Endothelial cell of umbilical vein (primary cell): ENCODE measurements at regions of chr9 and their contacts with region 1.

Region 1: DNA sequence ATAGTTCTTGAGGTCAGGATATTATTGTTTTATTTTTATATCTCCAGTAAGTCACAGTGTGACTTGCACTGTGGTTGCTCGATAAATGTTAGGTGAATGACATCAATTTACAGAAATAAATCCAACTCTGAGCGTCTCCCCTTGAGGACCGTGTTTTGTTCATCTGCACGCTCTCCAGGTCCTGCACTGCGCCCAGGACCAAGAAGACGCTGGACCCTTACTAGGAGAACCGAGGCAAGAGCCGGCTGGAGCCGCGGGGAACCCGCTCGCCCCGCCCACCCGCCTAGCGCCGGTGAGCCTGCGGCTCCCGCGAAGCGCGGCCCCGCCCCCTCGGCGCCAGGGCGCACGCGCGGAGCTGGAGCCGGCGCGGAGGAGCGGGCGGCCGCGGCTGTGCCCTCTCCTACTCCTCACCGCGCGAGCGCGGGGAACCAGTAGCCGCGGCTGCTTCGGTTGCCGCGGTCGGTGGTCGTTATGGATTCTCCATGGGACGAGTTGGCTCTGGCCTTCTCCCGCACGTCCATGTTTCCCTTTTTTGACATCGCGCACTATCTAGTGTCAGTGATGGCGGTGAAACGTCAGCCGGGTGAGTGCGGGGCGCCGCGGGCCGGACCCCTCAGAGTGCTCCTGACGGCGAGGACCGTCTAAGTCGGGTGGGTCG is at the start of gene TMEM38B:
- DNase-seq: peak; percentile 79
- H3K4me3 ChIP-seq: peak within 1 kb of the TSS; percentile 72 to 94 (median 75)
- H3K27ac ChIP-seq: no peak within 1 kb of the TSS
- H3K4me1 ChIP-seq: peaks cover 7% of the 10 kb centered on the region
- H3K27me3 ChIP-seq: peaks cover 18 to 27% of the 10 kb centered on the region in 2 experiments
- CTCF ChIP-seq: no peak
- POLR2A ChIP-seq: peak; percentile 38
- total RNA-seq, gene TMEM38B: 6.5 and 7.7 TPM in 2 replicates

Region 2: GRCh38 chr9:105437704-105438103 is 256.6 kb before region 1 on chr9:
- CTCF ChIA-PET with region 1: no interaction called
- POLR2A ChIA-PET with region 1: no interaction called
- dilution Hi-C with region 1: no loop called
- intact Hi-C with region 1: no loop called
- DNase-seq: no peak
- H3K4me3 ChIP-seq: no peak overlapping the region
- H3K27ac ChIP-seq: no peak overlapping the region
- H3K4me1 ChIP-seq: no peaks in the 10 kb centered on the region
- H3K27me3 ChIP-seq: no peaks in the 10 kb centered on the region
- CTCF ChIP-seq: no peak
- POLR2A ChIP-seq: no peak

Region 3: DNA sequence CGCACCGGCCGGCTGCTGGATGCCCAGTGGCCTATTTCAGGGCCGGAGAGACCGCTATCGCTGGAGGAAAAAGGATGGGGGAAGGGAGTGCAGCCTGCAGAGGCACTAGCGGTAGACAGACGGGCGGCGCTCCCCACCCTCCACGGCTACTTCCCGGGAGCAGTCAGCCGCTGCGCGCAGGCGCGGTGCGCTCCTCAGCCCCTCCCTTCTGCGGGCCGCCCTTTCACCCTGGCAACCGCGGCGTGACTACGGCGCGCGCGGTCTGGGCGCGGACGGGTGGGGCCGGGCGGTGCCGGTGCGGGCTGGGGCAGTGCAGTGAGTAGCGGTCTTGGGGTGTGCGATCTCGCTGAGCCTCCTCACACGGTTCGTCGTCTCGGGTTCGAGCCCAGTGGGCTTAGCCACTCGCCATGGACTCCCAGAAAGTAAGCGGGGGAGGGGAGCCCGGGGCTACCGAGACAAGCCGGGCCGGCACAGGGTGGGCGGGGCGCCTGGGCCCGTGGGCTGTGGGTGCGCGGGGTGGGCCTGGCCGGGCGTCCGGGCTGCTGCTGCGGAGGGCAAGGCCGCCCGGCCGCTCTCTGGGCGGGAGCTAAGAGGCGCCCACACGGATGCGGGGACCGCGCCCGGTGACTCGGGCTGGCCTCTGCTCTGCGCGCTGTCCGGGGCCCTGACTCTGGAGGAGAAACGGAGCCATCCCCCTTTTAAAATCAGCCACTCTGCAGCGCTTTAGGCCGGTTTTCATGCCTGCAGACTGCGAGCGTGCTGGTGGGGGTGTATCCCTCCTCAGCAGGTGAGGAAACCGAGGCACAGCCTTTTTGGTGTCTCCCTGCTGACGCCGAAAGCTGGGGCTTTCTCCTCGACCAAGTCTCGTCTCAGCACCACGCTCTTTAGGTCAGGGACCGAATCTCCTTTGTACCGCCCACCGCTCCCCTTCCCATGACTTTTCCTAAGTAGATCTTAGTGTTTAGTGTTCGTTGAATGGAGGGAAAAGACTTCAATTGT is 246.2 kb before region 1 on chr9 and contains the start of gene FSD1L:
- CTCF ChIA-PET with region 1: no interaction called
- POLR2A ChIA-PET with region 1: no interaction called
- dilution Hi-C with region 1: no loop called
- intact Hi-C with region 1: loop called (anchors 5 kb)
- DNase-seq: peak; percentile 72
- H3K4me3 ChIP-seq: peak within 1 kb of the TSS; percentile 35 to 84 (median 74)
- H3K27ac ChIP-seq: peak within 1 kb of the TSS; percentile 65
- H3K4me1 ChIP-seq: peaks cover 17% of the 10 kb centered on the region
- H3K27me3 ChIP-seq: no peaks in the 10 kb centered on the region
- CTCF ChIP-seq: no peak
- POLR2A ChIP-seq: peak; percentile 53
- total RNA-seq, gene FSD1L: 7.5 and 8.5 TPM in 2 replicates

Region 4: GRCh38 chr9:105557771-105558610 is 136.3 kb before region 1 on chr9 and contains the start of gene FKTN:
- CTCF ChIA-PET with region 1: no interaction called
- POLR2A ChIA-PET with region 1: no interaction called
- dilution Hi-C with region 1: no loop called
- intact Hi-C with region 1: loop called (anchors 2 kb)
- DNase-seq: peak; percentile 92
- H3K4me3 ChIP-seq: peak within 1 kb of the TSS; percentile 52 to 87 (median 67)
- H3K27ac ChIP-seq: peak within 1 kb of the TSS; percentile 27
- H3K4me1 ChIP-seq: peaks cover 9% of the 10 kb centered on the region
- H3K27me3 ChIP-seq: no peaks in the 10 kb centered on the region
- CTCF ChIP-seq: no peak
- POLR2A ChIP-seq: peak; percentile 71
- total RNA-seq, gene FKTN: 13.2 and 14.4 TPM in 2 replicates

Region 5: DNA sequence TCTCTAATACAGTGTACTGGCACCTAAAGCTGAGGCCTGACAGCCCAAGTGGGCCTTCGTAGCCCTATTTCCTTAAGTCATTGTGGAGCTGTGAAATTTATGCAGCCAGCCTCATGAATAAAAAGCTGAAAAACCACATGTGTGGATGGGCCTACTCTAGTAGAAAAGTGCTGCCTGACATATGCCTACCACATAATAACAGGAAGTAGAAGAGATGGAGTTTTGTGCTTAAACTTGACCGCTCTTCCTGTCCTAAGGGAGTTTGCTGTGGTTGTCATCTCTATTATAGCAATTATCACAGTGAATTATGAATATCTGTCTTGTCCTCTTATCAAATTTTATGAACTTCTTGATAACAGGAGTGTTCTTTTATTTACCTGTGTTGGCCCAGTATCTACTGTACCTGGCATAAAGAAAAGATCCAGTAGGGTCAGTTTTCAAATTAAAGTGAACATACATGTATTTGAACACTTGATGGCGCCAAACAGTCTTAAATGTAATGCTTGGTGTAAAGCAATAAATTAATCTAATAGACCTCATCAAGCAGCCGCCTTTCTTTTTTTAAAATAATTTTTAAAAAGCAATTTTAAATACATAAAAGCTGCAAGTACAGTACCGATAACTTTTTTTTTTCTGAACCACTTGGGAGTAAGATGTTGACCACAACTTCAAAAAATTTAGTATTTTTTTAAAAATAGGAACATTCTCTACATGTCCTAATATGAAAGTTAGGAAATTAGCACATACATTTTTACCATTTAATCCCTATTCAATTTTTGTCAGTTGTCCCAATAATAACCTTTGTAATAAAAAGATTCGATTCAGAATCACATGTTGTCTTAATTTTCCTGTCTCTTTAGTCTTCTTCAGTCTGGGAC is 85.4 kb before region 1 on chr9:
- CTCF ChIA-PET with region 1: interaction called, 6 read pairs
- POLR2A ChIA-PET with region 1: no interaction called
- dilution Hi-C with region 1: no loop called
- intact Hi-C with region 1: loop called (anchors 2 kb)
- DNase-seq: peak; percentile 52
- H3K4me3 ChIP-seq: no peak overlapping the region
- H3K27ac ChIP-seq: no peak overlapping the region
- H3K4me1 ChIP-seq: no peaks in the 10 kb centered on the region
- H3K27me3 ChIP-seq: no peaks in the 10 kb centered on the region
- CTCF ChIP-seq: peak; percentile 33 to 38
- POLR2A ChIP-seq: no peak

Region 6: DNA sequence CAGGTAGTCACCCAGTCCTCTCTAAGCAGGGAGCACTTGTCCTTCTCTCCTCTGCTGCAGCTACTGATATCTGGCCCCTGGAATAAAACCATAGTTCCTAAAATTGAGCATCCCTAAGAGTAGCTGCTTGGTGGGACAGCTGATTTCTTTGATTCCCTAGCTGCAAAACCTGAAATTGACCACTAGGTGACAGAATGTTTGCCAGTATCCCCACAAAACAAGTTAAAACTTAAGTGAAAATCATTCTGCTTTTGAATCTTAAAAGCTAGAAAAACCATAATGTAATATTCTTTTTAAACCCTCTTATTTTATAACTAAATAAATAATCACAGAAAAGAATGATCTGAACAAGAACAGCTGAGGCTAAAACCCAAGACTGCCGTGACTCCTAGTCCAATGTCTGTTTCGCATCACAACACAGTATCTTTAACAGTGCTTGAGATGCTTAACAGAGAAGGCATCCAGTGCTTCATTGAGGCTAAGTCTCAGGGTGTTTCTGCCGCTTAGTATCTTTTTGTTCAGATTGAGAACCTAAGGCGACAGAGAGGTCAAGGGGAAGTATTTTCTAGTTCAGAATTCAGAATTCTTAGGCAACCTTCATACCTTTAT is 56.4 kb before region 1 on chr9:
- CTCF ChIA-PET with region 1: interaction called, 15 read pairs
- POLR2A ChIA-PET with region 1: no interaction called
- dilution Hi-C with region 1: no loop called
- intact Hi-C with region 1: no loop called
- DNase-seq: no peak
- H3K4me3 ChIP-seq: no peak overlapping the region
- H3K27ac ChIP-seq: no peak overlapping the region
- H3K4me1 ChIP-seq: no peaks in the 10 kb centered on the region
- H3K27me3 ChIP-seq: no peaks in the 10 kb centered on the region
- CTCF ChIP-seq: peak; percentile 19 to 29
- POLR2A ChIP-seq: no peak

Region 7: DNA sequence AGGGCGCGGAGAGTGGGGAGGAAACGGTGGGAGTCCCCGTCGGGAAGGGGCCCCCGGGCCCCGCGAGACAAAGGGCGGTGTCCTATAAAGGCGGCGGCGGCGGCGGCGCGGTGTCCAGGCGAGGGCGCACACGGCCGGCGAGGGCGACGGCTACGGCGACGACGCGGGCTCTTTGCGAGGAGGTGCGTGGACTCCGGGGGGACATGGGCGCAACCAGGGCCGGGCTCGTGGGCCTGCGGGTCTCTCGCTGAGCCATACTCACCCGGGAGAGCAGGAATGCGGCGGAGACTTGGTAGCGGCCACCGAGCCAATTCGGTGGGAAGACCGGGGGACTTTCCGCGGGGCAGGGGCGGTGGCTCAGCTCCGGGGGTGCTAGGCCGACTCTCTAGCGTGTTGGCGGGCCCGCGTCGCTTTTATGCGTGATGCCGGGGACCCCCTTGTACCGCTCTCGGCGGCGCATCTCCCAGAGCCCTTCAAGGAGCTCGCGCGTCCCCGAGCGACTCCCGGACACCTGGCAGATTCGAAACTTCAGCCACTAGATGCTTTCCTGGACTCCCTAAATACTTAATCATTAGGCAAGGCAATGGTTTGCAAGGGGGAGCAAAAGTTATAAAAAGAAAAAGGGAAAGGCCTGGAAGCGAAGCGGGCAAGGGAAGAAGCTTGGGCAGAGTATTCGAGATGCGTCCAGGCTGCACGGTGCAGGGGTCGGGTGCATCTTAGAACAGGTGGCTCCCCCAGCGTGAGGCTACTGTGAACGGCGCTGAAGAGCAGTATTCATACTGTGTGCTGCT is 38.0 kb before region 1 on chr9:
- CTCF ChIA-PET with region 1: interaction called, 12 read pairs
- POLR2A ChIA-PET with region 1: no interaction called
- dilution Hi-C with region 1: no loop called
- intact Hi-C with region 1: no loop called
- DNase-seq: no peak
- H3K4me3 ChIP-seq: peak overlapping the region in 2 of 3 experiments; percentile 12 to 44
- H3K27ac ChIP-seq: no peak overlapping the region
- H3K4me1 ChIP-seq: peaks cover 3% of the 10 kb centered on the region
- H3K27me3 ChIP-seq: peaks cover 15 to 27% of the 10 kb centered on the region in 2 experiments
- CTCF ChIP-seq: peak in 1 of 2 donors; percentile 16
- POLR2A ChIP-seq: no peak

Region 8: GRCh38 chr9:105712773-105713172 is 18.5 kb after region 1 on chr9:
- CTCF ChIA-PET with region 1: interaction called, 16 read pairs
- POLR2A ChIA-PET with region 1: no interaction called
- dilution Hi-C with region 1: no loop called
- intact Hi-C with region 1: no loop called
- DNase-seq: no peak
- H3K4me3 ChIP-seq: no peak overlapping the region
- H3K27ac ChIP-seq: no peak overlapping the region
- H3K4me1 ChIP-seq: no peaks in the 10 kb centered on the region
- H3K27me3 ChIP-seq: no peaks in the 10 kb centered on the region
- CTCF ChIP-seq: no peak
- POLR2A ChIP-seq: no peak

Region 9: DNA sequence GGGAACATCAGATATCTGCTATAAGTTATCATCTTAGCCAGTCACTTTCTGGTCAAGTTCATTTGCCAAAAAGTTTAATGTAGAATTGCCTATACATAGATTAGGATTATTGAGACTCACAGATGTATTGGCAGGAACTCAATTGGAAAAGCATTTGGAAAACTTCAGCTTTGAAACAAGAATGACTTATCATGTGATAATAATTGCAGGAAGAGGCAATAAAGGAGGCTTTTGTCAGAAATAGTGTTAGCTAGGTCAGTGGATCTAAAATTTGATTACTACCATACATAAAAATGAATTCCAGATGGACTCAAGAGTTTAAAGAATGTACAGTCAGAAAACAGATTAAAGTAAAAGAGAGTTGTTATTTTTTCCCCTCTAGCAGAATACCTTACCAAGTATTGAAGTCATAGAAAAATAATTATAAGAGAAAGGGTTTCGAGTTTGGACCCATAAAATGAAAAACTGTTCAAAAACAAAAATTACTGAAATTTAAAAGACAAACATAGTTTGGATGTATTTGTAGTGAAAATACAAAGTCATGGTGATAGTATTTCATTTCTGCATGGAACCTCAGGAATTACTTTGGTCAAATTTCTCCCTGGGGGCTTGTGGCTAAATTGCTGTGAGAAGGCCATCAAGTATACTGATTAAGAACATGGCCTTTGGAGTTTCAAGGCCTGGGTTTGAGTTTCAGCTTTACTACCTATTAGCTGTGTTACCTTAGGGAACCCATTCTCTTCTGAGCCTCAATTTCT is 159.9 kb after region 1 on chr9:
- CTCF ChIA-PET with region 1: no interaction called
- POLR2A ChIA-PET with region 1: no interaction called
- dilution Hi-C with region 1: no loop called
- intact Hi-C with region 1: no loop called
- DNase-seq: no peak
- H3K4me3 ChIP-seq: no peak overlapping the region
- H3K27ac ChIP-seq: no peak overlapping the region
- H3K4me1 ChIP-seq: no peaks in the 10 kb centered on the region
- H3K27me3 ChIP-seq: no peaks in the 10 kb centered on the region
- CTCF ChIP-seq: no peak
- POLR2A ChIP-seq: no peak